ENCODE measurements at regions of chr5 and their contacts with region 1.

Region 1: DNA sequence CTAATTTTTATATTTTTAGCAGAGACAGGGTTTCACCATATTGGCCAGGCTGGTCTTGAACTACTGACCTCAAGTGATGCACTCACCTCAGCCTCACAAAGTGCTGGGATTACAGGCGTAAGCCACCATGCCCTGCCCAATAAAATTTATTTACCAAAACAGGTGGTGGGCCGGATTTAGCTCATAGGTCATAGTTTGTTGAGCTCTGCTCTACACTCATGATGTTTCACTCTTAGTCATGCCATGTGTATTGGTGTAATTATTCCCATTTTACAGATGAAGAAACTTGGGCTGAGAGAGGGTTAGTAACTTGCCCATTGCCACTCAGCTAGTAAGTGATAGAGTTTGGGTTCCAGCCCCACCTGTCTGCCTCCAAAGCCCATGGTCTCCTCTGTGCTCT is 93.1 kb upstream of the WWC1 start:
- DNase-seq: no peak
- H3K4me3 ChIP-seq: no peak overlapping the region
- H3K27ac ChIP-seq: no peak overlapping the region
- H3K4me1 ChIP-seq: no peaks in the 10 kb centered on the region
- H3K27me3 ChIP-seq: peaks cover 86% of the 10 kb centered on the region
- CTCF ChIP-seq: no peak

Region 2: DNA sequence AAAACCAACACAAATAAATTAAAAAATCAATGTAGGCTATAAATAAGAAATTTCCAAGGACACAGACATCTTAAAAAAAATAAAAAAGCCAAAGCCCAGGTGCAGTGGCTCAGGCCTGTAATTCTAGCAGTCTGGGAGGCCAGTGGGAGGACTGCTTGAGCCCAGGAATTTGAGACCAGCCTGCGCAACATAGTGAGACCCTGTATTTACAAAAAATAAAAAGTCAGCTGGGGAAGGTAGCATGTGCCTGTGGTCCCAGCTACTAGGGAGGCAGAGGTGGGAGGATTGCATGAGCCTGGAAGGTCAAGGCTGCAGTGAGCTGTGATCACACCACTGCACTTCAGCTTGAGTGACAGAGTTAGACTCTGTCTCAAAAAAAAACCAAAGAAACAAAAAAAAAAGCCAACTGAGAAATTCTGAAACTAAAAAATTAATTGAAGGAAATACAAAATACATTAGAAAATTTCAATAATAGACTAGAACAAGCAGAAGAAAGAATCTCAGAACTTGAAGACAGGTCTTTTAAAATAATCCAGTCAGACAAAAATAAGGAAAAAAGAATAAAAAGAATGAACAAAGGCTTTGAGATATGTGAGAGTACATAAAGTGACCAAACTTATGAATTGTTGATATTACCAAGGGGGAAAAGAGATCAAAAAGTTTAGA is 530.3 kb after region 1 on chr5:
- CTCF ChIA-PET with region 1: no interaction called
- POLR2A ChIA-PET with region 1: interaction called, 13 read pairs
- intact Hi-C with region 1: no loop called
- DNase-seq: no peak
- H3K4me3 ChIP-seq: no peak overlapping the region
- H3K27ac ChIP-seq: no peak overlapping the region
- H3K4me1 ChIP-seq: no peaks in the 10 kb centered on the region
- H3K27me3 ChIP-seq: peaks cover 7% of the 10 kb centered on the region; the same call in 1 of the 2 replicates
- CTCF ChIP-seq: no peak

Measured in PC-9 (cell line).